HAP-1 (cell line): ENCODE measurements at regions of chr1 and their contacts with region 1.

Region 1: GRCh38 chr1:95043141-95043980 is 29.4 kb downstream of the ALG14 start:
- DNase-seq: peak; percentile 84 to 87
- H3K4me3 ChIP-seq: no peak overlapping the region
- H3K4me1 ChIP-seq: no peaks in the 10 kb centered on the region
- H3K27me3 ChIP-seq: no peaks in the 10 kb centered on the region

Region 2: DNA sequence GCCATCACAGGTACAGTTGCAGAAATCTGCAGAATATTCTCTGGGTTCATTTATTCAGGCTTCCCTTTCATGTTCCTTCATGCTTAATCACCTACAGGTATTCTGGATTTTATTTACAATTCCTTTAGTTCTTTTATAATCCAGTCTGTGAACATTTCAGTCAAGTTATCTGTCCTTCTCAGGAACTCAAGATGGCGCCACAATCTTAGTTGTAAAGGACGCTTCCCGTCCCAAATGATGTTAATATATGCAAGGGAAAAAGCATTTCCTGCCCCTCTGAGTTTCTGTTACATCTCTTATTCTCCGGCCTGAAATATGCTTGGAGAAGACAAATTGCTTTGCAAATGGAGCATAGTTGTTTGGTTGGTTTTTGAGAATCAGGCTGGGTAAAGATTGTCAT is 521.1 kb before region 1 on chr1:
- in situ Hi-C with region 1: loop called (anchors 10 kb)
- DNase-seq: peak; percentile 49 to 55
- H3K4me3 ChIP-seq: no peak overlapping the region
- H3K4me1 ChIP-seq: peaks cover 2% of the 10 kb centered on the region
- H3K27me3 ChIP-seq: no peaks in the 10 kb centered on the region

Region 3: GRCh38 chr1:94854458-94855306 is 188.7 kb before region 1 on chr1:
- in situ Hi-C with region 1: loop called (anchors 5 kb)
- DNase-seq: peak; percentile 87 to 90
- H3K4me3 ChIP-seq: peak overlapping the region; percentile 18
- H3K4me1 ChIP-seq: peaks cover 6% of the 10 kb centered on the region
- H3K27me3 ChIP-seq: no peaks in the 10 kb centered on the region

Region 4: GRCh38 chr1:94873522-94874351 is 169.6 kb before region 1 on chr1:
- in situ Hi-C with region 1: no loop called
- DNase-seq: no peak
- H3K4me3 ChIP-seq: no peak overlapping the region
- H3K4me1 ChIP-seq: peaks cover 4% of the 10 kb centered on the region
- H3K27me3 ChIP-seq: no peaks in the 10 kb centered on the region